PC-9 (cell line): ENCODE measurements at regions of chr3 and their contacts with region 1.

Region 1: GRCh38 chr3:131349946-131350347 is 31.6 kb upstream of the NUDT16 start:
- DNase-seq: peak; percentile 82 to 89
- H3K4me3 ChIP-seq: no peak overlapping the region
- H3K27ac ChIP-seq: peak overlapping the region; percentile 91
- H3K4me1 ChIP-seq: peaks cover 60% of the 10 kb centered on the region
- H3K27me3 ChIP-seq: no peaks in the 10 kb centered on the region
- CTCF ChIP-seq: no peak

Region 2: DNA sequence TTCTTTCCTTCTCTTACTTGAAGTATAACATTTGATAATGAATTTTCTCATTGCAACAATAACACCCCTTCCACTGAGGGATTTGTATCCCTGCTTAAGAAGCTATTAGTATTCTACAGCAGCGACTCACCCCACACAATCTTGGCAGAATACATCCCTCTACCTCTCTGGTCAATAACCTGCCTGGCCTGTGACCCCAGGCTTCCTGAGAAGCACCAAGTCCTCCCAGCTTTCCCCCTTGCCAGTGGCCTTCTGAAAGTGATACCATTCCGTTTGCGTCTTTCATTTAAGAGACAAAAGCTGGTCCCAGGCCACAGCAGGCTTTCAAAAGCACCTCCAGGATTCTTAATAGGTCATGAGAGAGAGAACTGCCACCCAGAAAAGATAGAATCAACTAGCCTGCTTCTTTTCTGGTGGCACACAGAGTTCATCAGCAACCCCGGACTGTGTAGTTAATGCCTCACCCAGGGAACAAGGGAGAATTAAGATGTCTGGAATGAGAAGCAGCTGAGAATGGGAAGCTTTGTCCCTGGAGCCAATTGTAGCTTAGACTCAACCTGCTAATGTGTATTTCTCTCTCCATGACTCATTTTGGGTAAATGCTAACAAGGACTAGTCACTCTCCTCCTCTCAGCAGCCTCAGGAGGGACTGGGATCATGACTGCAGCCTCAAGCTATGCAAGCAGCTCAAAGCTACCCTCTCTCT is 785.8 kb after region 1 on chr3:
- CTCF ChIA-PET with region 1: no interaction called
- POLR2A ChIA-PET with region 1: interaction called, 11 read pairs
- intact Hi-C with region 1: no loop called
- DNase-seq: peak; percentile 71 to 97
- H3K4me3 ChIP-seq: peak overlapping the region; percentile 52
- H3K27ac ChIP-seq: peak overlapping the region; percentile 100
- H3K4me1 ChIP-seq: peaks cover 50% of the 10 kb centered on the region
- H3K27me3 ChIP-seq: no peaks in the 10 kb centered on the region
- CTCF ChIP-seq: no peak